ENCODE measurements at regions of chr1 and their contacts with region 1.

Region 1: GRCh38 chr1:145720877-145721671 is 1.8 kb downstream of the CD160 start:
- DNase-seq: peak; percentile 83
- ATAC-seq: peak; percentile 91
- H3K4me3 Mint-ChIP-seq: peak overlapping the region; percentile 49
- H3K27ac Mint-ChIP-seq: no peak overlapping the region
- H3K4me1 Mint-ChIP-seq: peaks cover 18% of the 10 kb centered on the region
- H3K27me3 Mint-ChIP-seq: peaks cover 23% of the 10 kb centered on the region

Region 2: DNA sequence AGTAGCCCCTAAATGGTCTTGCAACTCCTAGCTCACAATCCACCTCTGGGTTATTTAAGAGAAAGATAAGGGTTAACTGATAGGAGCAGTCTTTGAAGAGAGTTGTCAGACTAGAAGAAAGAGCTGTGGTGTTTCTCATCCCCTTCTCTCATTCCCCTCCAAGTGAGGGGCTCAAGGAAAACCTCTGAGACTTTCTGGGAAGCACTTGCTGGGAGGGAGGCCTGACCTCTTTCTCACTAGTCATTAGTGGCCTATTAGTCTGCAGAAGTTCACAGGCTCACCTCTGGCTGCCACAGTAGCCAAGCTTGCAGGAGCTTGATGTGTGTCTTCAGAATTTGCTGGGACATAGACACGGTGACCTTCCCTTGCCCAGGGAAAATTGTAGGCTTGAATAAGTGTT is 119.5 kb before region 1 on chr1:
- CTCF ChIA-PET with region 1: interaction called, 3 read pairs
- POLR2A ChIA-PET with region 1: no interaction called
- intact Hi-C with region 1: loop called in 1 of 2 experiments (anchors 5 kb)
- DNase-seq: no peak
- ATAC-seq: no peak
- H3K4me3 Mint-ChIP-seq: no peak overlapping the region
- H3K27ac Mint-ChIP-seq: no peak overlapping the region
- H3K4me1 Mint-ChIP-seq: no peaks in the 10 kb centered on the region
- H3K27me3 Mint-ChIP-seq: peaks cover 3% of the 10 kb centered on the region

Region 3: DNA sequence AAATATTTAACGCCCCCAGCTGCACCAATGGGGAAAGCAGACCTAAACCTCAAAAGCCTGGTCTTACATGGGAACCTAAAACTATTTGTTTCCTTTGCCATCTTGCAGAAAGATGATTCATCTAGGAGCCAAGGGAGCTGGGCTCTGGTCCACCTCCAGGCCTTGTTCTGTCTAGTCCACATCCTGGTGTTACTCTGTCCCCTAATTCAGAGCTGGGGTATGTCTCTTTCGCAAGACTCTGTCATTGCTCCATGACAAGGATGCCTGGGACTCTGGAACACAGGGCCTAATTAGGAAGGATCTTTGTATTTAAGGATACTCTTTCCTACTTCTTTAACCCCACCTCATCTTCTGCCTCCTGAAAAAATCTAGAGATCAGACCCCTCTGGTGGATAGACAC is 29.9 kb before region 1 on chr1:
- CTCF ChIA-PET with region 1: interaction called, 13 read pairs
- POLR2A ChIA-PET with region 1: no interaction called
- intact Hi-C with region 1: no loop called
- DNase-seq: no peak
- ATAC-seq: no peak
- H3K4me3 Mint-ChIP-seq: no peak overlapping the region
- H3K27ac Mint-ChIP-seq: no peak overlapping the region
- H3K4me1 Mint-ChIP-seq: peaks cover 22% of the 10 kb centered on the region
- H3K27me3 Mint-ChIP-seq: no peaks in the 10 kb centered on the region

Region 4: DNA sequence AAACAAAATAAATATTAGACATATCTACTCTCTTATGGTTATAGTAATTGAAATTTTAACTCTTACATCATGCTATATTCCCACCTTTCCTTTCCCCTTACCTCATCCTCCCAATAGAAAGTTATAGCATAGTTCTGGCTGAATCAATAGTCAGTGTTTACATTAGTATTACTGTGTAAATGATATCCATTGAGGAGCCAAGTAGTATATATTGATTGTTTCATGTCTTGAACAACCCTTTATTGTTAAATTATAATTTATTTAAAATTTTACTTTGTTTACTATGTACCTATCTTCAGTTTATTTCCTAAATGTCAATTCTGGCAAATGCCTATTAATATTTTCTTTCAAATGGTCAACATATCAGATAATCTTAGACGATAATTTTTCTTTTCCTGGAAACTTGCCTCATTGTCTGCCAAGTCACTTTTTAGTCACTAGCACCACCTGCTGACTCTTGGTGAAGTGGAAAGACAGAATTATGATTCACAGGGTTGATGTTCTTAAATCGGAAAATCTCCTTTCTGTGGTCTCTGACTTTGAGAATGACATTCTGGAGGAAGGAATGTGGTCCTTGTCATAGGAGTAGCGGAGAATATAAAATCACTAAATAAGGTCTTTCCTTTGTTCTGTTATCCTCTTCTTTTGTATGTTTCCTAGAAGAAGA is 291.8 kb after region 1 on chr1:
- CTCF ChIA-PET with region 1: no interaction called
- POLR2A ChIA-PET with region 1: no interaction called
- intact Hi-C with region 1: loop called in 1 of 2 experiments (anchors 10 kb)
- DNase-seq: peak; percentile 71
- ATAC-seq: peak; percentile 81
- H3K4me3 Mint-ChIP-seq: no peak overlapping the region
- H3K27ac Mint-ChIP-seq: peak overlapping the region; percentile 21
- H3K4me1 Mint-ChIP-seq: peaks cover 7% of the 10 kb centered on the region
- H3K27me3 Mint-ChIP-seq: peaks cover 5% of the 10 kb centered on the region

Measured in activated CD4-positive, alpha-beta T cell treated with anti-CD3 and anti-CD28 coated beads for 36 hours (primary cell).